ENCODE measurements at regions of chr1 and their contacts with region 1.

Region 1: DNA sequence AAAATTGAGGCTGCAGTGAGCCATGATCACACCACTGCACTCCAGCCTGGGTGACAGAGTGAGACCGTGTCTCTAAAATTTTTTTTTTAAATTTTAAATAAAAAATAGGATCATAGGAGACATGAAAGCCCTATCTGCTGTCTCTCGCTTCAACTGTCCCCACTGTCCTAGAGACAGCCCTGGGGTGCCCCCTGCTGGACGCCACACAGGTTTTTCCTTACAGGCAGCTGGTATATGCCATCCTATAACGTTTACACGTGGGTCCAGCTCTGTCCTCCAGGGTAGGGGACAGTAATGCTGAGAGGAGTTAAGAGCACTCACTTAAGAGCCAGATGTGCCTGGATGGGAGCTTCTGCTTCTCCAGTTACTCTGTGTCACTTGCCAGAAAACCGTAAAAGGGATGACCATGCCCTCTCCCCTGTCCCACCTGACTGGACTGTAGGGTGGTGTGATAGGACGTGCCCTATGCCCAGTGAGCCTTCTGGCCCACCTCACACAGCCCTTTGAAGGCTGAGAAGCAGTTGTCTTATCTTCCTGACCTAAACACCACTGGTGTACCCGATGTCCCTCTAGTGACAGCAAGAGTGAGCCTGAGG is 8.5 kb downstream of the FBXO2 start:
- DNase-seq: peak; percentile 78 to 88
- ATAC-seq: peak; percentile 53 to 60 (median 56)
- H3K4me3 ChIP-seq: no peak overlapping the region
- H3K27ac ChIP-seq: no peak overlapping the region
- H3K4me1 ChIP-seq: peaks cover 4% of the 10 kb centered on the region
- H3K27me3 ChIP-seq: peaks cover 0 to 7% (median 6%) of the 10 kb centered on the region in 3 donors
- CTCF ChIP-seq: peak; percentile 68

Region 2: DNA sequence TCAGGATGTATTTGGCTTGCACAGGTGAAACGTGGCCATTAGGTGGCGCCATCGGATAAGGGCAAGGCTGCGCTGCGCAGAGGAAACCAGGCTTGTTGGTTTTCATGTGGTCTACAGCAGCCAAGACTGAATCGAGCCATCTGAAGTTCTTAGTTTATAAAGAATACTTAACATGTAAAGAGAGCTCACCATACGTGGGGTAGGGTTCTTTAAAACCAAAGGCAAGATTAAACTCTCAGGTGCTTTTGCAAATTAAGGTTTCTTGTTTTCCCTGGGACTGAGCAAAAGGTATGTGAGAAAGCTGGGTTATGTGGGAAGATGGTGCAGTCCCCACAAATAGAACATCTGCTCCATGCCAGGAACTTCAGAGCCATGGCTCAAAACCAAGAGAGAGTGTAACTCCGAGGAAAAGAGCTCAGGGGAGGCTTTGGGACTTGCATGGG is 608.0 kb before region 1 on chr1:
- intact Hi-C with region 1: loop called (anchors 5 kb)
- DNase-seq: peak; percentile 86 to 93
- ATAC-seq: peak; percentile 93 to 97 (median 95)
- H3K4me3 ChIP-seq: peak overlapping the region; percentile 40
- H3K27ac ChIP-seq: peak overlapping the region; percentile 61
- H3K4me1 ChIP-seq: peaks cover 8% of the 10 kb centered on the region
- H3K27me3 ChIP-seq: peaks cover 0 to 2% (median 0%) of the 10 kb centered on the region in 3 donors
- CTCF ChIP-seq: peak; percentile 98

Region 3: DNA sequence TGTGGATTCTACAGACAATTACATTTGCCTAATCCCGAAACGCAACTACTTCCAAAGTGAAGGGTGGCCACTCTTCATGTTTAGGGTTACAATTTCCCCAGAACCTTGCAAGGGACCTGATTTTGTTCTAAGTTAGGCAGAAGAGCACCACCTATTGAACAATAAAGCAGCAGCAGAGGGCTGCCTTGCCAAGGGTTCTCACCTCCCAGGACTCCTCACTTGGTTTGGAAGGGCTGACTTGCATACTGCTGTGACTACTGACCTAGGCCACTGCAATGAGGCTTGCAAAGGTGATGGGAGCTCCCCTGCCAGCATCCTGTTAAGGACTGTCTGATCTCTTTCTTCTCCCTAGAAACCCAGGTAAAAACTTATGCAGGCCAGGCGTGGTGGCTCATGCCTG is 397.6 kb before region 1 on chr1:
- intact Hi-C with region 1: loop called in 1 of 2 experiments (anchors 10 kb)
- DNase-seq: no peak
- ATAC-seq: no peak
- H3K4me3 ChIP-seq: no peak overlapping the region
- H3K27ac ChIP-seq: no peak overlapping the region
- H3K4me1 ChIP-seq: no peaks in the 10 kb centered on the region
- H3K27me3 ChIP-seq: no peaks in the 10 kb centered on the region
- CTCF ChIP-seq: no peak

Region 4: DNA sequence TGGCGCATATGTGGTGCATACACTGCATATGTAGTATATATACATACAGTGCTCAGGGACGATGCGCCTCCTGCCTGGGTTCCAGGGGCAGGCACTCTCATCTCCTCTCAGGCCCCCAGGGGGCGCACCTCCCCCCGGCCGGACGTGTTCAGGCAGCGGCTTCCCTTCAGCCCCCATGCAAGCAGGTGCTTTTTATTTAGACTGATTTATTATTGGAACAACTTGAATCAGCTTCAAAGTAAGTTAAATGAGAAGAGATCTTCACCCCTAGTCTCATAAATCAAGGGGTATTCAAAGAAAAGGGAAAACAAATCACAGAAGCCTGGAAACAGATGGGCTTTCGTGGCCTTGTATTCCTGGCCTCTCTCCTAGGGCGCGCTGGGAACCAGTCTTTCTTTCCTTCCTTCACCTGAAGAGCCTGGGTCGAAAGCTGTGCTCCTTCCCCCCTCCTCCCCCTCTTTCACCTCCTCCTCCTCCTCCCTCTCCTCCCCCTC is 308.1 kb before region 1 on chr1:
- intact Hi-C with region 1: loop called in 1 of 2 experiments (anchors 5 kb)
- DNase-seq: peak; percentile 65 to 76
- ATAC-seq: peak in 2 of 4 donors; percentile 47 to 58
- H3K4me3 ChIP-seq: no peak overlapping the region
- H3K27ac ChIP-seq: no peak overlapping the region
- H3K4me1 ChIP-seq: peaks cover 20% of the 10 kb centered on the region
- H3K27me3 ChIP-seq: no peaks in the 10 kb centered on the region
- CTCF ChIP-seq: peak; percentile 79

Region 5: GRCh38 chr1:11615090-11615489 is 30.7 kb before region 1 on chr1:
- intact Hi-C with region 1: no loop called
- DNase-seq: no peak
- ATAC-seq: no peak
- H3K4me3 ChIP-seq: no peak overlapping the region
- H3K27ac ChIP-seq: no peak overlapping the region
- H3K4me1 ChIP-seq: no peaks in the 10 kb centered on the region
- H3K27me3 ChIP-seq: peaks cover 0 to 58% (median 6%) of the 10 kb centered on the region in 3 donors
- CTCF ChIP-seq: no peak

Region 6: GRCh38 chr1:11719313-11720032 is 73.7 kb after region 1 on chr1:
- intact Hi-C with region 1: loop called in 1 of 2 experiments (anchors 5 kb)
- DNase-seq: peak; percentile 83 to 89
- ATAC-seq: peak; percentile 78 to 92 (median 84)
- H3K4me3 ChIP-seq: peak overlapping the region; percentile 37
- H3K27ac ChIP-seq: no peak overlapping the region
- H3K4me1 ChIP-seq: peaks cover 7% of the 10 kb centered on the region
- H3K27me3 ChIP-seq: peaks cover 0 to 4% (median 0%) of the 10 kb centered on the region in 3 donors
- CTCF ChIP-seq: peak; percentile 93